ENCODE measurements at regions of chr5 and their contacts with region 1.

Region 1: GRCh38 chr5:89930591-89931392 is 478.8 kb downstream of the CETN3 start:
- DNase-seq: peak; percentile 88
- H3K4me3 ChIP-seq: peak overlapping the region in 1 of 3 experiments; percentile 21
- H3K27ac ChIP-seq: peak overlapping the region; percentile 97
- H3K4me1 ChIP-seq: peaks cover 29% of the 10 kb centered on the region
- H3K27me3 ChIP-seq: no peaks in the 10 kb centered on the region
- CTCF ChIP-seq: no peak
- POLR2A ChIP-seq: no peak

Region 2: DNA sequence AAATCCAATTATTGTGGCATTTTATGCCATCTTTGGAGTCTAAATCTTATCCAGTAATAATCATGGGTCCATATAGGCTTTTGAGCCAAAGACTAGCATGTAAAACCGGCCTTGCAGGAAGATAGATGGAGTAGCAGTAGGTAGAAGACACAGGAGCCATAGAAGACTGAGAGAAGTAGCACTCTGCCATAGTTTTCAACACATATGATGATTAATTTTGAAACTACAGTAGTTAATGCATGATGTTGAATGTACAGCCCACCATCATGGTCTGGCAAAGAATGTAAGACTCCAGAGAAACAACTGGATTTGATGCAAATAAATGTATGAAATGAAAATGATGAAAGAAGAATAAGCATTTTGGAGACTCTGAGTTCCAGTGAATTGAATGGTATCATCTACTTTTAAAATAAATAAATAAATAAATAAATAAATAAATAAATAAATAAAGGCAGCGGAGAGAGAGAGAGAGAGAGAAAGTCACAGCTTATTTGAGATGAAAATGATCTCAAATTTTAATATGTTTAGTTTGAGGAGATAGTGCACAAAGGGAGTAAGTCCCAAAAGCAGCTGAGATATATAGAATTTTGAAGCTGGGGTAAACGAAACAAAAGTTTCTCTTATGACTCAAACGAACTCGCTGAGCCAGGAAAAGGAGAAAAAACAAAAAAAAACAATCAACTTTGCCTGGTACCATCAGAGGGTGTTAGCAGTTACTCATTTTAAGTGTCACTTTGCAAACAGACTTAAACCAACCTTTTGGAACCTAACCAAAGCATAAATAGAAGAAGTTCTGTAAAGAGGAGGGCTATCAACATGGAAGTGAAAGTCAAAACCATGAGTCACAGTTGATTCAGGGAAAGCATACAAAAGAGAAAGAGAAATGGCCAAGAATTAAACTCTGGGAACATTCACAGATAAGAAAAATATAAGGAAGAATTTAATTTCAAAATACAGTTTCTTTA is 90.1 kb after region 1 on chr5:
- CTCF ChIA-PET with region 1: interaction called, 3 read pairs
- POLR2A ChIA-PET with region 1: no interaction called
- dilution Hi-C with region 1: no loop called
- intact Hi-C with region 1: loop called (anchors 1 kb)
- DNase-seq: peak; percentile 88
- H3K4me3 ChIP-seq: peak overlapping the region; percentile 36 to 68 (median 36)
- H3K27ac ChIP-seq: peak overlapping the region; percentile 93
- H3K4me1 ChIP-seq: peaks cover 6% of the 10 kb centered on the region
- H3K27me3 ChIP-seq: no peaks in the 10 kb centered on the region
- CTCF ChIP-seq: no peak
- POLR2A ChIP-seq: no peak